Right ventricle myocardium inferior (tissue), 1 donor: ENCODE measurements at regions of chr4 and their contacts with region 1.

Region 1: DNA sequence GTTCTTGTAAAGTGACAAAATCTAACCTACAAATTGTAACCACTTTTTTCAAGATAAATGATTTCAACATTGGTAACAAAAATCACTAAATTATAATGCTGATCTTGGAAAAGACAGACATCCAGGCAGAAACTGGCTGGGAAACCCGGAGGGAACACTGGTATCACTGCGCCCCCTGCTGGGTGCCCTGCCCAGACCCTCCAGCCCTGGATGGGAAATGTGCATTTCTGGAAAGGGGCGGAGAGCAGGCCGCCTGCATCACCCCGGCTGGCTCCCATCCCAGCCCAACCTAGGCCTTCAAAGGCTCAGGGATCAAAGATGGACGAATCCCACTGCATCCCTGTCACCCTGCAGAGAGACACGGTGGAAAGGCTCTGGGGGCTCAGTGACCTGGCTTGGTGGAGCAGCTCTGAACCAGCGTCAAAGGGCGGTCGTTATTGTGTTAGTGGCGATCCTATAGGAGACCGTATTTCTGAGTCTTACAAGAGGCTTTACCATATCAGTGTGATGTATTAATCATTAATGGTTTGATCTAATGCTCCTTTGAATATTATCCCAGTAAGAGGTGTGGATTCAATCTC is 37.3 kb downstream of the ACOX3 start:
- DNase-seq: peak; percentile 91
- ATAC-seq: peak; percentile 83

Region 2: DNA sequence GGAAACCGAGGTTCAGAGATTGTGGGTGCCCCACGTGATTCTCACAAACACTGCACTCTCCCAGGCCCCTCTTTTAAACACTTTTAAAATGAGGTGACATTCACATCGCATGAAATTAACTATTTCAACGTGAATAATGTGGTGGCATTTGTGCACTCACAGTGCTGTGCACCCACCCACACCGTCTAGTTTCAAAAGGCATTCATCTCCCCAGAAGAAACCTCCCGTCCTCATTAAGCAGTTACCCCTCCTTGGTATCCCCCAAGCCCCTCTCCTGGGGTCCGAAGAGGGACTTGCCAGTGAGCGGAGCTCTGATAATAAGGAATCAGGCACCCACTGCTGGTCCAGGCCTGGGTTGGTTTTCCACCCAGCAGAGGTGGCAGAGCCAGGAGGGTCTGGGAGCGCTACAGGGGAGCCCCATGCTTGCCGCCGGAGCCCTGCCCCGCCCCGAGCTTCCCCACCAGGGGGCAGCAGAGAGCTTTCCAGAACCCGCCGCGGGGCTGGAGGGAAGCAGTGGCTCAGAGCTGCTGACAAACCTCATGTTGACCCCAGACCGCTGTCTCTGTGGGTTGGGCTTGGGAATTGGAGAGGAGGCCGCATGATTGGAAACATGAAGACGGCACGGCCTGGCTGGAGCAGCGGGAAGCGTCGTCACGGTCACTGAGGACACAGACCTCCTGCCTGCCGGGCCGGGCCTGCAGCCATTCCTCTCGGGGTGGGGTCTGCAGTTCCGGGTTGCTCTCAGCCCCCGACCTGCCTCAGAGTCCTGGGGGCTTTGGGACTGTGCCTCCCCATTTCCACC is 161.2 kb before region 1 on chr4:
- intact Hi-C with region 1: loop called (anchors 1 kb)
- DNase-seq: peak; percentile 93
- ATAC-seq: peak; percentile 86

Region 3: DNA sequence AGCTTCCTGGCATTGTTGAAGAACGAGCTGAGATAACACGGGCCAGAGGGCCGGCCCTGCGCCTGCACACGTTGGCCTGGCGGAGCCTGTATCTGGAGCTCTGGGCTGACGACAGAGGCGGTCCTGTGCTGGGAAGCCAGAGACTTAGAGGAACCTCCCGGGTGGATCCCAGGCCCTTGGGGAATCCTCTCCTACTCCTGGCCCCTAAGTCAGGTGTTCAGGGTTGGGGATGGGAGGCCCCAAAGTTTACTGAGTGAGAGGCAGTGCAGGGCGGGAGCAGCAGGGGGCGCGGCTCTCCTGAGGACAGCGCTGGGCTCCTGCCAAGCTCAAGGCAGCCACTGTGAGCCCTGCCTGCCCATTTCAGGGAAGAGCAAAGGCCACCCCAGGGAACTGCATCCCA is 136.2 kb before region 1 on chr4:
- intact Hi-C with region 1: loop called (anchors 1 kb)
- DNase-seq: peak; percentile 92
- ATAC-seq: peak; percentile 62

Region 4: DNA sequence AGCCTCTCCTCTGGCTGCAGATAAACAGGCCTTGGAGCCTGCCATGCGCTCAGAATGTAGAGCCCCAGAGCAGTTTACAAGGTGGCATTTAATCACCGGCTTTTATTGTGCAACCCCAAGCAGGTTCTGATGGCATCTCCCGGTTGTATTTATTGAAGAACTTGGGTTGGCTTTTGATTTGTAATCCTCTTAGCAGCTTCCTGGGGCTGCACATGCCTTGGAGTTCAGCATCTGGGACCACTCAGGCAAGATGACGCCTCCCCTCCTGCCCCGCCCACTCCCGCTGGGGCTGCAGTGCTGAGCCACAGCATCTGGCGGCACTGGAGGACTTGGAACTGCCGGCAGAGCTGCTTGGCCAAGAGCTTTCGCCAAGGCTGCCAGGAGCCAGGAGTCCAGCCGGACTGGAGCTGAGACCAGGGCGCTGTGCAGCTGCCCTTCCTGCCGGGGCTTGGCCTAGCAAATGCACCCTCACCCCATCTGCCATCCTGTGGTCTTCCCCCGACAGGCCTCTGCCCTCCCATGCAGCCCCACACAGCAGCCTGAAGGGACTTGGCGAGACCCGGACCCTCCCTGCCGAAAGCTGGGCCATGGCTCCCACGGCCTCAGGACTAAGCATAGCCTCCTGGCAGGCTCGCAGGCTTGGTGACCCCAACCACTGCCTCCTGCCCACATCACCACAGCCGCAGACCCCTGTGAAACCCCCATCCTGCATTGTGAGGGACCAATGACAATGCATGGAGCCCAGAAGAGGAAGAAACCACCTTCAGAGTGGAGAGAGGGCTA is 128.3 kb before region 1 on chr4:
- intact Hi-C with region 1: loop called (anchors 2 kb)
- DNase-seq: peak; percentile 93
- ATAC-seq: peak; percentile 80

Region 5: GRCh38 chr4:8320386-8320750 is 82.9 kb before region 1 on chr4:
- intact Hi-C with region 1: loop called (anchors 2 kb)
- DNase-seq: no peak
- ATAC-seq: peak; percentile 26

Region 6: GRCh38 chr4:8330821-8331574 is 72.3 kb before region 1 on chr4:
- intact Hi-C with region 1: loop called (anchors 2 kb)
- DNase-seq: peak; percentile 90
- ATAC-seq: peak; percentile 97